Ovary (tissue), 10 donors: ENCODE measurements at regions of chr12 and their contacts with region 1.

Region 1: DNA sequence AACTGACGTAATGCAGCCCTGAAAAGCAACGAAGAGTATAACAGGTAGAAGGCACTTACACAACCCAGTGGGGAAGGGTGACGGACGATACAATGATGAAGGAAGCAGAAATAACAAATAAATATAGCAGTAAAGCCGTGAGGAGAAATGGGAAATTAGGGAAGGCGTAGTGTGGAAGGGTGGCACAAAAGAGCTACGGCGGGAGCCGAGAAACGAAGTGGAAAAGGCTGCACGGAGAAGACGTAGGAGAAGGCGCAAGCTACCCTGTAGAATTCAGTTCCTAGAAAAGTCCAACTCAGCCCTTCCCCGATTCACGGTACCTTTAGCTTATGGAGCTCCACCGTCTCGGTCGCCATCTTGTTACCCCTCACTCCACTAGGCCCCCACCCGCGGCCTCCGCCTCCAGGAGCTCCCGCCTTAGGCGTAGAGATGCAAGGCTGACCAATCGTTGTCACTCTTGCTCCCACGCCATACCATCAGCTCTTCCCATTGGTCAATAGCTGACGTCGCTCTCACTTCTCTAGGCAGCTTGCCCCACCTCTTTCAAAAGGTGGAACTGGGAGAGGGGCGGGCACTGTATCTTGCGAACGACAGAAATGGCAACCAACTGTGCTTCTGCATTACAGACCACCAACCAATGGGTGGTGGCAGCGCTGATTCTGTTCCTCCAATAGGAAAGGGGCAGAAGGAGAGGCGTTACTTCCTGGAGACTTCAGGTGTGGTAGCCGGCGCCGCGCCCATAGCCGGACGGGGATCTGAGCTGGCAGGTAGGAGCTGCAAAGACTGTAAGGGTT is at the starts of genes ORMDL2 and SARNP:
- DNase-seq: peak; percentile 94 to 98 (median 95)
- H3K4me3 ChIP-seq: peak within 1 kb of the TSS; percentile 86
- H3K27ac ChIP-seq: peak within 1 kb of the TSS; percentile 42 to 68
- H3K4me1 ChIP-seq: peaks cover 3% of the 10 kb centered on the region
- H3K27me3 ChIP-seq: no peaks in the 10 kb centered on the region
- CTCF ChIP-seq: no peak
- EP300 ChIP-seq: no peak
- POLR2A ChIP-seq: peak; percentile 77
- total RNA-seq, gene ORMDL2: 8.6 to 38.9 (median 20.8) TPM
- total RNA-seq, gene SARNP: 48.0 to 60.8 (median 58.6) TPM

Region 2: GRCh38 chr12:55745361-55746146 is 72.0 kb before region 1 on chr12:
- intact Hi-C with region 1: loop called in 2 of 4 experiments (anchors 5 to 10 kb)
- DNase-seq: peak; percentile 60 to 68 (median 64)
- H3K4me3 ChIP-seq: no peak overlapping the region
- H3K27ac ChIP-seq: peak overlapping the region; percentile 3 to 57
- H3K4me1 ChIP-seq: peaks cover 12% of the 10 kb centered on the region
- H3K27me3 ChIP-seq: no peaks in the 10 kb centered on the region
- CTCF ChIP-seq: no peak
- EP300 ChIP-seq: no peak
- POLR2A ChIP-seq: no peak

Region 3: GRCh38 chr12:55757701-55758100 is 59.8 kb before region 1 on chr12:
- intact Hi-C with region 1: loop called in 1 of 4 experiments (anchors 10 kb)
- DNase-seq: no peak
- H3K4me3 ChIP-seq: no peak overlapping the region
- H3K27ac ChIP-seq: no peak overlapping the region
- H3K4me1 ChIP-seq: no peaks in the 10 kb centered on the region
- H3K27me3 ChIP-seq: no peaks in the 10 kb centered on the region
- CTCF ChIP-seq: no peak
- EP300 ChIP-seq: no peak
- POLR2A ChIP-seq: no peak

Region 4: DNA sequence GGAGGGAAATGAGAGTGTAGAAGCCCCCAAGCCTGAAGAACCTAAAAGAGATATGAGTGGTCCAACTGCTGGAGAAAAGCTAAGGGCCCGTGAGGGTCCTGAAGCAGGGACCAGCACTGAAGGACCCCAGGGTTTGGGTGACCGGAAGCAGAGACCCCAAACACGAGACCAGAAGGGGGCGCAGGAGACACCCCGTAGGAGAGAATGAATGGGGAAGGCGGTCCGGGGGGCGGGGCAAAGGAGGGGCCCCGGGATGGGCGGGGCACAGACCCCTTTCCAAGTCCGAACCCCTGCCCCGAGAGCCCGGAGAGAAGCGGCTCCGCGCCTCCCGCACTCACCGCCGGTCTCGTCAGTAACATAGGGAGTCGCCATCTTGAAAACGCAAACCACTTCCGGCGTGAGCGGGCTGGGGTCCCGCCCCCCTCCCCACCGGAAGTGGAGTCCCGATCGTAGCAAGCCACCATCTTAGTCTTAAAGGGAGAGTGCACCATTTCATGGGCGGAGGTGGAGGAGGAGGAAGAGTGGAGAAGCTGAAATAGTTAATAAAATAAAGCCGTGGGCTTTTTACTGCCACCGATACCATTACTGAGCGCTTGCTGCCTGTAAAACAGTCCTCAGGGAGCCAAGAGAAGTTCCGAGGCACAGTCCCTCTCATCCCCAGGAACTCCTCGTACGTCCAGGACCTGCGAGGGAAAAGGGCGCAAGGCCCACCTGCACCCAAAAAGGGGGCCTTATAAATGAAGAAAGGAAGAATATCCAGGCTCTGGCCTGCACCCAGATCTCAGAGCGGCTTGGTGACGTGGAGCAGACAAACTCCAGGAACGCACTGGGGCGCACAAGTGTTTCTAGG is 109.4 kb after region 1 on chr12:
- intact Hi-C with region 1: no loop called
- DNase-seq: peak; percentile 84 to 93 (median 93)
- H3K4me3 ChIP-seq: peak overlapping the region; percentile 87
- H3K27ac ChIP-seq: peak overlapping the region; percentile 80 to 94
- H3K4me1 ChIP-seq: peaks cover 16% of the 10 kb centered on the region
- H3K27me3 ChIP-seq: no peaks in the 10 kb centered on the region
- CTCF ChIP-seq: peak; percentile 63 to 71 (median 68)
- EP300 ChIP-seq: no peak
- POLR2A ChIP-seq: peak; percentile 79